ENCODE measurements at regions of chr1 and their contacts with region 1.

Region 1: GRCh38 chr1:67760030-67760821 is 73.0 kb downstream of the GNG12 start:
- DNase-seq: peak; percentile 83 to 89
- ATAC-seq: peak; percentile 88

Region 2: DNA sequence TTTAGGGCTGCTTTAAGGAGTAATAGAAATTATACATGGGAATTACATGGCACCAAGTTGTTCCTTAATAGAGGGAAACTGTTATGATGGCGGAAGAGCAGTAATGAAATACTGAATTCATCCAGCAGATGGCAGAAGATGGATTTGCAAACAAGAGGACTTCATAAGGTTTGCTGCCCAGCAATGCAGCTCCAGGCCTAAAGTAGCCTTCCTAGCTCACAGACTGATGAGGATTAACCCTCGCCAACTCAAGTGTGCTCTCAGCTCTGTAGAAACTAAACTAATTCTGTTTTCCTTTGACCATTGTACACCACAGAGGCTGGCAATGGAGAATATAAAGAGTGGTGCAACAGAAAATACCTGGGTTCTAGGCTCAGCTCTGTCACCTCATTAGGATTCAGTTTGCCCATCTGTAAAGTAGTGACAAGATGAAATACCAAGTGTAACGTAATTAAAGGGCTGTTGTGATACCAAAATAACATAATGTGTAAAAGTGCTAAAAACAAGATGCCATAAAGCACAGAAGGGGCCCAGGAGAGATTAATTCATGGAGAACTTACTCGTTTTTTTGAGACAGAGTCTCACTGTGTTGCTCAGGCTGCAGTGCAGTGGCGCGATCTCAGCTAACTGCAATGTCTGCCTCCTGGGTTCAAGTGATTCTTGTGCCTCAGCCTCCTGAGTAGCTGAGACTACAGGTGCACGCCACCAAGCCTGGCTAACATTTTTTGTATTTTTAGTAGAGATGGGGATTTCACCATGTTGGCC is 227.6 kb before region 1 on chr1:
- intact Hi-C with region 1: loop called in 1 of 2 experiments (anchors 5 kb)
- DNase-seq: peak; percentile 31 to 39
- ATAC-seq: peak; percentile 72

Region 3: DNA sequence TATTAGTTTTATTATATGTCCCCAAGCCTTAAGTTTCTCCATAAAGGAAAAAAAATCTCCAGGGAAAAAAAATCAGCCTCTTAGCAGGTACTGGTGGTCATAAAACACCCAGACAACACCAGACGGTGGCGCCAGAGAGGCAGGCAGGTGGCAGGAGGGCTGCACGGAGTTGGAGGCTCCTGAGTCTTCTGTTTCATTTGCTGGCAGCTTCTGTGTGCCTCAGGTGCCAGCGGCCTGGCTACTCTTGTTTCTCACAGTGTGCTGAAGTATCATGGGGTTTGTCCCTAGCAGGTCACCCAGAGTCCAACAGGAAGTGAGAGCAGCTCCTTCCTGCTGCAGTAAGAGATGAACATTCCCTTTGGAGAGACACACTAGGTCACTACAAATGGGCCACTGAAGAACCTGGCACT is 198.5 kb before region 1 on chr1:
- intact Hi-C with region 1: loop called (anchors 2 to 10 kb)
- DNase-seq: peak; percentile 94 to 99
- ATAC-seq: peak; percentile 88

Region 4: GRCh38 chr1:67608661-67609571 is 151.3 kb before region 1 on chr1:
- intact Hi-C with region 1: no loop called
- DNase-seq: no peak
- ATAC-seq: no peak

Region 5: GRCh38 chr1:67685067-67685557 is 75.1 kb before region 1 on chr1 and contains the start of gene GADD45A:
- intact Hi-C with region 1: loop called in 1 of 2 experiments (anchors 5 kb)
- DNase-seq: peak; percentile 97 to 100
- ATAC-seq: peak; percentile 82
- total RNA-seq, gene GADD45A: 43.4 to 49.7 TPM

Region 6: GRCh38 chr1:68010090-68010489 is 249.9 kb after region 1 on chr1:
- intact Hi-C with region 1: loop called in 1 of 2 experiments (anchors 10 kb)
- DNase-seq: no peak
- ATAC-seq: no peak